ENCODE measurements at regions of chr2 and their contacts with region 1.

Region 1: GRCh38 chr2:112960230-112961005 is 17.4 kb upstream of the IL36G start:
- DNase-seq: no peak
- H3K4me3 ChIP-seq: no peak overlapping the region
- H3K27ac ChIP-seq: no peak overlapping the region
- H3K4me1 ChIP-seq: peaks cover 0 to 3% (median 0%) of the 10 kb centered on the region in 4 experiments
- H3K27me3 ChIP-seq: no peaks in the 10 kb centered on the region

Region 2: GRCh38 chr2:112794131-112794733 is 166.2 kb before region 1 on chr2:
- CTCF ChIA-PET with region 1: no interaction called
- POLR2A ChIA-PET with region 1: no interaction called
- DNase-seq: peak; percentile 61 to 87 (median 82)
- H3K4me3 ChIP-seq: no peak overlapping the region
- H3K27ac ChIP-seq: peak overlapping the region in 1 of 2 experiments; percentile 59
- H3K4me1 ChIP-seq: peaks cover 13 to 41% (median 24%) of the 10 kb centered on the region in 4 experiments
- H3K27me3 ChIP-seq: no peaks in the 10 kb centered on the region

Region 3: DNA sequence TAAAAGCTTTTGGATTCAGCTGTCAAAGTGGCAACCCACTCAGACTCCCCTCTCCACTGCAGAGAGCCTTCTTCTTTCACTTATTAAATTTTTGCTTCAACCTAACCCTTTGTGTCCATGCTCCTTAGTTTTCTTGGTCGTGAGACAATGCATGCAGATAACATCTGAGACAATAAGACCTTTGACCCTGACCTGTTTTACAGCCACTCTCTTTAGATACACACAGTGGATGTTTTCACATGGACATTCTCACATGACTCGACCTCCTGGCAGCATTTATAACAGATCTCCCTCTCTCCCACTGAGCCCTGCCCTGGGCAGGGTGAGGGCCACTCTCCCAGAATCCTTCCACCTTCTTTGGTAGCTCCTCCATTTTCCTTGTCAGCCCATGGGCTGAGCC is 13.0 kb before region 1 on chr2:
- CTCF ChIA-PET with region 1: interaction called, 17 read pairs
- POLR2A ChIA-PET with region 1: no interaction called
- DNase-seq: no peak
- H3K4me3 ChIP-seq: no peak overlapping the region
- H3K27ac ChIP-seq: no peak overlapping the region
- H3K4me1 ChIP-seq: peaks cover 0 to 3% (median 0%) of the 10 kb centered on the region in 4 experiments
- H3K27me3 ChIP-seq: no peaks in the 10 kb centered on the region

Region 4: DNA sequence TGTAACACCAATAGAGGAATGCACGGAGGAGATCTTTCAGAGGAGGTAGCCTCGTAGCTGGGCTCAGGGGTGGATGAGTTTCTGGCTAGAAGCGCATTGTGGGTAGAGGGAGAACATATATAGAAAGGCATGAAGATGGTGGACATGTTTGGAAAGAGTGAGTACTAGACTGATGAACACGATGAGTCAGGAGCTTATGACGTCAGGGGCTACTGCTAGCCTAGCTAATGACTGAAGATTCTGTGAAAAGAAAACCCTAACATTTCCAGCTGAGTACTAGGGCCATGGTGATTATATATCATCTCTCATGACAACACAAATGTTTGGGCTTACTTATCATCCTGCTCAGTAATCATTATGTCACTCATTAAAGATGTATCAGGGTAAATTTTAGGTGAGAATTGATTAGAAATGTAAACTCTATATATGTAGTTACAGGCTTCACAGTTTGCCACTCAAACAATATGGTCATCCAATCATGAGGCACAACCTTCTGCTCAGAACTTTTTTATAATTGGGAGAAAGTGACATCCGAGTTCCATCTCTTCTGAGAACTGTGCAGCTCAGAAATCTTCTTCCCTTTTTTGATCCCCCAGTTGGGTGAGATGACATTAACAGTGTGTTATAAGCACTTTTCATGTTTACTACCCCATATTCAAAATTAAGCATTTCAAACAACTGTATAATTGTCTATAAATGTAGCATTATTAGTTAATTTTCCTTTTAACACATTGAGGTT is 144.8 kb after region 1 on chr2:
- CTCF ChIA-PET with region 1: no interaction called
- POLR2A ChIA-PET with region 1: no interaction called
- DNase-seq: no peak
- H3K4me3 ChIP-seq: no peak overlapping the region
- H3K27ac ChIP-seq: no peak overlapping the region
- H3K4me1 ChIP-seq: peaks cover 0 to 2% (median 0%) of the 10 kb centered on the region in 4 experiments
- H3K27me3 ChIP-seq: no peaks in the 10 kb centered on the region